ENCODE measurements at regions of chr10 and their contacts with region 1.

Region 1: GRCh38 chr10:88091490-88092105 is 228.2 kb downstream of the PTEN start:
- DNase-seq: peak; percentile 90
- ATAC-seq: peak; percentile 97
- H3K4me3 Mint-ChIP-seq: no peak overlapping the region
- H3K27ac Mint-ChIP-seq: peak overlapping the region; percentile 36
- H3K4me1 Mint-ChIP-seq: peaks cover 36% of the 10 kb centered on the region
- H3K27me3 Mint-ChIP-seq: peaks cover 14% of the 10 kb centered on the region
- CTCF ChIP-seq: no peak

Region 2: DNA sequence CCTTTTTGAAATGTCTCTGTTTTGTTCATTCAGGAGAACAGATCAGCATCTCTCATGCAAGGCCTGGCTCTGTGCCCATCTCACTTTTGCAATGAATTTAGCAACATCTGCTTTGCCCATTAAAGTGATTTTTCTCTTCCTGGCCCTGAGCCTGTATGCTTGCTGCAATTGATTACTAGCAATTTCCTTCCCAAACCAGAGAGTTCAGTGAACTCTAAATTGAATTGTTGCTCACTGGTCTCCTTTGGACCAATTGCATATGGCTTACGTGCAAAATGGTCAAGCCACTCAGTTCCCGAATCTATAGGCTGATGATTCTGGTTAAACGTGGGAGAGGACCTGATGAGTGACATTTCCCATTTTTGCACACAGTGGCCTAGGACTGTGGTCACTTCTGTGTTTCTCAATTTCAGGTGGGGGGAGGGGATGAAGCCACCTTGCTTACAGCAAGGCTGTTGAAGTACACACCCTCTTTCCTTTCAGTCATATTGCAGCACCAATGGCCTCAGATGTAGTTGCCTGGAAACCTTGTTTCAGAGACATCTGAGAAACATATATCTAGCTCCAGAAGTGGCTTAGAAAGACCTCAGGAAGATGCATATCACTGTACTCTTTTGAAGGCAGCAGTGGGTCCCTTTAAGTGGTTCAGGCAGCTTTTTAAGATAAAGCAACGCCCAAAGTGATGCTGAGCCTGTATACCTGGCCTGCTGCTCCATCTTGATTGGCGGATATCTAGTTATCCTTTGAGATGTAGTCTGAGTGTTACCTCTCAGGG is 26.8 kb before region 1 on chr10:
- CTCF ChIA-PET with region 1: interaction called, 12 read pairs
- POLR2A ChIA-PET with region 1: interaction called, 15 read pairs
- intact Hi-C with region 1: loop called (anchors 2 kb)
- DNase-seq: peak; percentile 36
- ATAC-seq: peak; percentile 54
- H3K4me3 Mint-ChIP-seq: no peak overlapping the region
- H3K27ac Mint-ChIP-seq: no peak overlapping the region
- H3K4me1 Mint-ChIP-seq: peaks cover 77% of the 10 kb centered on the region
- H3K27me3 Mint-ChIP-seq: no peaks in the 10 kb centered on the region
- CTCF ChIP-seq: no peak

Region 3: GRCh38 chr10:88270871-88271713 is 179.5 kb after region 1 on chr10:
- CTCF ChIA-PET with region 1: interaction called, 6 read pairs
- POLR2A ChIA-PET with region 1: interaction called, 4 read pairs
- intact Hi-C with region 1: loop called (anchors 1 kb)
- DNase-seq: peak; percentile 79
- ATAC-seq: peak; percentile 91
- H3K4me3 Mint-ChIP-seq: peak overlapping the region; percentile 53
- H3K27ac Mint-ChIP-seq: peak overlapping the region; percentile 90
- H3K4me1 Mint-ChIP-seq: peaks cover 46% of the 10 kb centered on the region
- H3K27me3 Mint-ChIP-seq: peaks cover 5% of the 10 kb centered on the region
- CTCF ChIP-seq: no peak

Measured in activated CD8-positive, alpha-beta T cell treated with anti-CD3 and anti-CD28 coated beads for 36 hours (primary cell).